Activated CD8-positive, alpha-beta T cell treated with anti-CD3 and anti-CD28 coated beads for 36 hours (primary cell): ENCODE measurements at regions of chr17 and their contacts with region 1.

Region 1: DNA sequence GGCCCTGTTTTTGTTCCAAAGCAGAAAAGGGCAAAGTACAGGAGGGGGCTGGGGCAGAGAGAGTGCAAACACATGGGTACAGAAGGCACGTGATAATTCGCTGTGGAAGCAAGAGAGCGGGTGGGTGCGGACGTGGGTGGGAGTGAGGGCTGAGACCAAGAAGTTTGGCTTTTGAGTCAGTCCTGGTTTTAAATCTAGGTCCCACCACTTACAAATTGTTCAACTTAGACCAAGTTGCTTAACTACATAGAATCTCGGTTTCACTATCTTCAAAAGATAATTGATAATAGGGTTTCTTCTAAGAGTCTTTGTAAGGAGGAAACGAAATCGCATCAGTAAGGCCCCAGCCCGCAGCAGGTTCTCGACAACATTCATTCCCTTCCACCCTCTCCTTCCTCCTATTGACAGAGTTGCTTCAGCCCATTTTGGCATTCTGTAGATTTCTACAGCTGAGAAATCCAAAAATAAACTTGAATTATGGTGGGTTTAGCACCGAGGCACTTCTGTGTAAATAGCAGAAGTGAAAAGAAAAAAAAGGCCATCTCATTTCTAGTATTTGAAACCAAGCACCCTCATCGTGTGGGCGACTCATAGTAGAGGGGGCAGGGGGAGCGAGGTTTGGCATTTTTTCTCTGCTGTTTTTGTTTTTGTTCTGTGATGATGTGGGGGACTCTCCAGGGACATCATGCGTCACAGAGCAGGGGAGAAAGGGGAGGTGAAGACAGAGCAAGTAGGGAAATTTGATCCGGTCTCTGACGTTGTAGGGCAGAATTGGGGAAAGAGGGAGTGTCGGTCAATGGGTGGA is 33.6 kb upstream of the CCR7 start:
- DNase-seq: peak; percentile 94
- ATAC-seq: peak; percentile 60
- H3K4me3 Mint-ChIP-seq: peak overlapping the region; percentile 54
- H3K27ac Mint-ChIP-seq: peak overlapping the region; percentile 99
- H3K4me1 Mint-ChIP-seq: peaks cover 95% of the 10 kb centered on the region
- H3K27me3 Mint-ChIP-seq: no peaks in the 10 kb centered on the region
- CTCF ChIP-seq: no peak

Region 2: GRCh38 chr17:40542558-40543411 is 56.1 kb before region 1 on chr17:
- CTCF ChIA-PET with region 1: interaction called, 4 read pairs
- POLR2A ChIA-PET with region 1: interaction called, 39 read pairs
- intact Hi-C with region 1: no loop called
- DNase-seq: peak; percentile 91
- ATAC-seq: peak; percentile 60
- H3K4me3 Mint-ChIP-seq: peak overlapping the region; percentile 71
- H3K27ac Mint-ChIP-seq: peak overlapping the region; percentile 93
- H3K4me1 Mint-ChIP-seq: peaks cover 91% of the 10 kb centered on the region
- H3K27me3 Mint-ChIP-seq: no peaks in the 10 kb centered on the region
- CTCF ChIP-seq: no peak

Region 3: GRCh38 chr17:40551879-40552768 is 46.7 kb before region 1 on chr17:
- CTCF ChIA-PET with region 1: interaction called, 4 read pairs
- POLR2A ChIA-PET with region 1: interaction called, 787 read pairs
- intact Hi-C with region 1: no loop called
- DNase-seq: peak; percentile 58
- ATAC-seq: peak; percentile 12
- H3K4me3 Mint-ChIP-seq: peak overlapping the region; percentile 54
- H3K27ac Mint-ChIP-seq: peak overlapping the region; percentile 88
- H3K4me1 Mint-ChIP-seq: peaks cover 99% of the 10 kb centered on the region
- H3K27me3 Mint-ChIP-seq: no peaks in the 10 kb centered on the region
- CTCF ChIP-seq: no peak

Region 4: DNA sequence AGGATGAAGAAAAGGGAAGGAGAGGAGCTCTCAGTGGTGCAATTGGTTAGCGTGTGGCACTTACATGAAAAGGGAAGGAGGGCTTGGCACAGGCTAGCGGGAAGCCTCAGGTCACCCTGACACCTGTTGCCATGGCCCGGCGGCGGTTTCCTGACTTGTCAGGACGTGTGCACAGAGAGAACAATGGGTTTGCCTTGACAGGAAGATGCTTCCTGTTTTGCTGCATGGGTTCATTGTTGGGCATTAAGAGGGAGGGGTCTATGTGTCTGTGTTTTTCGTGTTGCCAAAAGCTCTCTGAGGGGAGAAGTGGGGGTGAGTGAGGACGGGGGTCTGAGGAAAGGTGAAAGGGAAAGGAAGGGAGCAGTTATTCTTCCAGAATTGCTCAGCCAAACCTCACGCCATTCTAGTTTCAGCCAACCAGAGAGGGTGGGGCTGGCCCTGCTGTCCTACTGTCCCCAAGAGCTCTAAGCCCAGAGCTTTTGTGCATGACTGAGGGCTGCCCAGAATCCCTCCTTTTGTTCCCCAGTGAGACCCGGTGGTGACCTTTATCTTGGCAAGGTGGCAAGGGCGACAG is 16.4 kb before region 1 on chr17:
- CTCF ChIA-PET with region 1: interaction called, 10 read pairs
- POLR2A ChIA-PET with region 1: interaction called, 21 read pairs
- intact Hi-C with region 1: no loop called
- DNase-seq: peak; percentile 84
- ATAC-seq: peak; percentile 49
- H3K4me3 Mint-ChIP-seq: peak overlapping the region; percentile 62
- H3K27ac Mint-ChIP-seq: peak overlapping the region; percentile 88
- H3K4me1 Mint-ChIP-seq: peaks cover 92% of the 10 kb centered on the region
- H3K27me3 Mint-ChIP-seq: no peaks in the 10 kb centered on the region
- CTCF ChIP-seq: no peak

Region 5: GRCh38 chr17:40615295-40615988 is 16.6 kb after region 1 on chr17:
- CTCF ChIA-PET with region 1: interaction called, 36 read pairs
- POLR2A ChIA-PET with region 1: interaction called, 44 read pairs
- intact Hi-C with region 1: no loop called
- DNase-seq: peak; percentile 58
- ATAC-seq: peak; percentile 44
- H3K4me3 Mint-ChIP-seq: peak overlapping the region; percentile 65
- H3K27ac Mint-ChIP-seq: peak overlapping the region; percentile 92
- H3K4me1 Mint-ChIP-seq: peaks cover 81% of the 10 kb centered on the region
- H3K27me3 Mint-ChIP-seq: no peaks in the 10 kb centered on the region
- CTCF ChIP-seq: peak; percentile 43

Region 6: DNA sequence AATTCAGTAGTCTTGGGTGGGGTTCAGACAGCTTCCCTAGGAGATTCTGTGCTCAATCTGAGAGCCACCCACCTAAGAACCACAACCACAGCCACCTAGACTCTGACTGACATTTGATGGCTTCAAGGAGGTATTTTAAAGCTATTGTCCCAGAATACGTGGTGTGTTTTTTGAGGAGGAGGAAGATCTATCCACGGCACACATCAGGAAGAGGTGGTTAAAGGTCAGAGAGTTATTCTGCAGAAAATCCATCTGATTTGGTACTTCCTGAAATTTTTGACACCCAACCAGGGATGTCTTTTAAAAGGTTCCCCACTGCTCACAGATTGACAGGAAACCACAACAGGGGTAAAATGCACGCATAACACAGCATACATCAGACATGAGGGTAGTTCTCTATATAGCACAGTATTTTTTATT is 23.7 kb after region 1 on chr17:
- CTCF ChIA-PET with region 1: interaction called, 31 read pairs
- POLR2A ChIA-PET with region 1: interaction called, 9 read pairs
- intact Hi-C with region 1: no loop called
- DNase-seq: peak; percentile 83
- ATAC-seq: peak; percentile 65
- H3K4me3 Mint-ChIP-seq: peak overlapping the region; percentile 20
- H3K27ac Mint-ChIP-seq: peak overlapping the region; percentile 37
- H3K4me1 Mint-ChIP-seq: peaks cover 68% of the 10 kb centered on the region
- H3K27me3 Mint-ChIP-seq: no peaks in the 10 kb centered on the region
- CTCF ChIP-seq: no peak